Thyroid gland (tissue), 4 donors: ENCODE measurements at regions of chr3 and their contacts with region 1.

Region 1: DNA sequence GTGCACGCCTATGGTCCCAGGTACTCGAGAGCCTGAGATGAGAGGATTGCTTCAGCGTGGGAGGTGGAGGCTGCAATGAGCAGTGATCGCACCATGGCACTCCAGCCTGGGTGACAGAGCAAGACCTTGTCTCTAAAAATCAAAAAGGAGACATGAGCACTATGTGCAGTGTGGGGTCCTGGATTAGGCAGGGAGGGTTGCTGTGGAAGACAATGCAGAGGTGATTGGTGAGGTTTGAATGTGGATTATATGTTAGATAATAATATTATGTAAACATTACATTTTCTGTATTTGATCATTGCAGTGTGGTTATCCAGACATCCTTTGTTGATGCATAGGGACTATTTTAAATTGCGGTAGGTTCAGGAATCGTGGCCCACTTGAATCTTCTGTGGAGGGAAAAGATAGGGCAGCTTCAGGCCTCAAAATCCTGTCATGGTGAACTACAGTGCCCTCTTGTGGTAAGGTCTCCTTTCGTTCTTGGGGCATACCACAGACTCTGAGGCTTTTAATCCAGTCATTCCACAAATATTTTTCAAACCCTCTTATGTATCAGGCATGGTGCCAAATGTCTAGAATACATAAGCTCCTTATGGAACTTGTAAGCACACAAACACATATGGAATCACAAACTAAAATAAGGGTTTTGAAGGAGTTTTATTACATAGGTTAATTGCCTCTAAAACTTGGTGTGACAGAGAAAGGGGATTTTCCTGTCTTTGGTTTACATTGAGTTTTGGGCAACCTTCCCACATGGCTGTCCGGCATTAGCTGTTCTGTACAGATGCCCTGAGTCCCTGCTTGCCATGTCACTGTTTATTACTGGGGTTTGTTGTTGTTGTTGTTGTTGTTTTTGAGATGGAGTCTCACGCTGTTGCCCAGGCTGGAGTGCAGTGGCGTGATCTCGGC is 37.7 kb downstream of the GPD1L start:
- DNase-seq: peak; percentile 47 to 52
- H3K4me3 ChIP-seq: no peak overlapping the region
- H3K27ac ChIP-seq: no peak overlapping the region
- H3K4me1 ChIP-seq: peaks cover 8 to 14% of the 10 kb centered on the region in 2 donors
- H3K27me3 ChIP-seq: no peaks in the 10 kb centered on the region
- CTCF ChIP-seq: peak; percentile 48 to 90 (median 72)
- POLR2A ChIP-seq: no peak

Region 2: GRCh38 chr3:32022947-32023346 is 121.2 kb before region 1 on chr3:
- intact Hi-C with region 1: loop called (anchors 5 kb)
- DNase-seq: no peak
- H3K4me3 ChIP-seq: no peak overlapping the region
- H3K27ac ChIP-seq: no peak overlapping the region
- H3K4me1 ChIP-seq: peaks cover 7 to 11% of the 10 kb centered on the region in 2 donors
- H3K27me3 ChIP-seq: no peaks in the 10 kb centered on the region
- CTCF ChIP-seq: no peak
- POLR2A ChIP-seq: no peak